MCF 10A (cell line): ENCODE measurements at regions of chr1 and their contacts with region 1.

Region 1: GRCh38 chr1:97893844-97894243 is 27.0 kb downstream of the DPYD start:
- DNase-seq: no peak
- H3K4me3 Mint-ChIP-seq: no peak overlapping the region
- H3K27ac Mint-ChIP-seq: peak overlapping the region; percentile 42
- H3K4me1 Mint-ChIP-seq: peaks cover 10% of the 10 kb centered on the region
- H3K27me3 Mint-ChIP-seq: no peaks in the 10 kb centered on the region
- CTCF ChIP-seq: no peak

Region 2: GRCh38 chr1:97875996-97876395 is 17.8 kb before region 1 on chr1:
- CTCF ChIA-PET with region 1: no interaction called
- POLR2A ChIA-PET with region 1: no interaction called
- intact Hi-C with region 1: loop called (anchors 1 kb)
- DNase-seq: peak; percentile 71
- H3K4me3 Mint-ChIP-seq: no peak overlapping the region
- H3K27ac Mint-ChIP-seq: no peak overlapping the region
- H3K4me1 Mint-ChIP-seq: peaks cover 16% of the 10 kb centered on the region
- H3K27me3 Mint-ChIP-seq: no peaks in the 10 kb centered on the region
- CTCF ChIP-seq: no peak

Region 3: GRCh38 chr1:97906567-97907241 is 12.9 kb after region 1 on chr1:
- CTCF ChIA-PET with region 1: no interaction called
- POLR2A ChIA-PET with region 1: interaction called, 15 read pairs
- intact Hi-C with region 1: no loop called
- DNase-seq: peak; percentile 93
- H3K4me3 Mint-ChIP-seq: peak overlapping the region; percentile 38
- H3K27ac Mint-ChIP-seq: no peak overlapping the region
- H3K4me1 Mint-ChIP-seq: peaks cover 12% of the 10 kb centered on the region
- H3K27me3 Mint-ChIP-seq: no peaks in the 10 kb centered on the region
- CTCF ChIP-seq: no peak

Region 4: GRCh38 chr1:98086796-98087441 is 193.1 kb after region 1 on chr1:
- CTCF ChIA-PET with region 1: no interaction called
- POLR2A ChIA-PET with region 1: no interaction called
- intact Hi-C with region 1: no loop called
- DNase-seq: peak; percentile 78
- H3K4me3 Mint-ChIP-seq: no peak overlapping the region
- H3K27ac Mint-ChIP-seq: peak overlapping the region; percentile 1
- H3K4me1 Mint-ChIP-seq: peaks cover 25% of the 10 kb centered on the region
- H3K27me3 Mint-ChIP-seq: no peaks in the 10 kb centered on the region
- CTCF ChIP-seq: no peak